CD4-positive, alpha-beta T cell (primary cell): ENCODE measurements at regions of chr1 and their contacts with region 1.

Region 1: DNA sequence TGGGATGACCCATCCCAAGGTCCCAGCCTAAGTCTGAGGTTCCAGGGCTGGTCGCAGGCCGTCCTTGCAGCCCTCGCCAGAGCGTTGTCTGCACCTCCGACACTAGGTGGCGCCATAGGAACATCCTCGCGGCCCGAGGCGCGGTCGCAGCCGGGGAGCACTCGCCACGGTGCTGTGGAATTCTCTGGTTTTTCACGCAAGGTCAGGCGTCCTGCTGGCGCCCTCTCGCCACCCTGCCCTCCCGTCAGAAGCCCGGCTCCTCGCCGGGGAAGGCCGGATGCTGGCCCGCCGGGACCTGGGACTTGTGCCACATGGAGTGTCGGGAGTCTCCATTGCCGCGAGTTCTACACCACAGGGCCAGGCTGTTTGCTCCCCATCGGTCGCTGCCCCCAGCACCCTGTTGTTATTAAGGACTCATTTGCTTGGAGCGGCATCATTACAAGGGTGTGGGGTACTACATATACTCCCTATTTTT is 196.8 kb upstream of the LMO4 start:
- DNase-seq: peak; percentile 56 to 85 (median 66)
- ATAC-seq: peak; percentile 89
- H3K4me3 ChIP-seq: peak overlapping the region; percentile 56
- H3K4me3 Mint-ChIP-seq: peak overlapping the region; percentile 89
- H3K27ac ChIP-seq: no peak overlapping the region
- H3K27ac Mint-ChIP-seq: no peak overlapping the region
- H3K4me1 ChIP-seq: peaks cover 9% of the 10 kb centered on the region
- H3K4me1 Mint-ChIP-seq: peaks cover 10% of the 10 kb centered on the region
- H3K27me3 ChIP-seq: peaks cover 9 to 15% of the 10 kb centered on the region in 2 experiments
- H3K27me3 Mint-ChIP-seq: peaks cover 44% of the 10 kb centered on the region
- CTCF ChIP-seq: peak; percentile 91

Region 2: GRCh38 chr1:87953732-87954344 is 822.0 kb after region 1 on chr1:
- CTCF ChIA-PET with region 1: no interaction called
- POLR2A ChIA-PET with region 1: no interaction called
- intact Hi-C with region 1: loop called (anchors 5 kb)
- DNase-seq: peak; percentile 7 to 69 (median 32)
- ATAC-seq: no peak
- H3K4me3 ChIP-seq: no peak overlapping the region
- H3K4me3 Mint-ChIP-seq: no peak overlapping the region
- H3K27ac ChIP-seq: no peak overlapping the region
- H3K27ac Mint-ChIP-seq: no peak overlapping the region
- H3K4me1 ChIP-seq: no peaks in the 10 kb centered on the region
- H3K4me1 Mint-ChIP-seq: no peaks in the 10 kb centered on the region
- H3K27me3 ChIP-seq: no peaks in the 10 kb centered on the region
- H3K27me3 Mint-ChIP-seq: peaks cover 28% of the 10 kb centered on the region
- CTCF ChIP-seq: peak; percentile 70

Region 3: DNA sequence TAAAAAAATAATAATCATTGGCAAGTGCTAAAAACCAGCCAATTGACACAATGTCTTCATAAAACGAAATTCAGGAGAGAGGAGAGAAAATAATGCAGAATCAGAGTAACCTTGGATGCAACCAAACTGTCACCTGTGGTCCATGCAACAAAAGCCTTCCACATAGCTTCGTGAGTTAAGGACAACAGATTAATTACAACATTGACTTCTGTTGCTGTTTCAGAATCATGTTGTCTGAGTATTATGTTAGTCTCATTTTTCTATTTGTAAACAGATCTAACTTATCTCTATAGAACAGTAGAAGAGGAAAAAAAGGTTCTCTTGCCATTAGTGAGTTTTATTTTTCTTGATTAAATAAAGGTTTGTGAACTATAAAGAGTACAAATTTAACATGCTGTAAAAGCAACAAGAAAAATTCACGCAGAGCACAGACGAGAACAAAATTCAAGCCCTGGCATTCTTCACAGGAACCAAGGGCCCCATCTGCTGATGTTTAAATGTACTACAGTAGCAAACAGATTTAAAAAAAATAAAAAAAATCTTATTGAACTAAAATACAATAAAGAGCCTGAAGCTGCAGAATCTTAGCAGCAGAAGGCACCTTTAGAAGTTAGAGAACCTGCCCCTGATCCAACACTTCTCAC is 1171.1 kb after region 1 on chr1:
- CTCF ChIA-PET with region 1: no interaction called
- POLR2A ChIA-PET with region 1: no interaction called
- intact Hi-C with region 1: loop called in 1 of 2 experiments (anchors 5 kb)
- DNase-seq: no peak
- ATAC-seq: no peak
- H3K4me3 ChIP-seq: no peak overlapping the region
- H3K4me3 Mint-ChIP-seq: no peak overlapping the region
- H3K27ac ChIP-seq: no peak overlapping the region
- H3K27ac Mint-ChIP-seq: no peak overlapping the region
- H3K4me1 ChIP-seq: no peaks in the 10 kb centered on the region
- H3K4me1 Mint-ChIP-seq: no peaks in the 10 kb centered on the region
- H3K27me3 ChIP-seq: no peaks in the 10 kb centered on the region
- H3K27me3 Mint-ChIP-seq: no peaks in the 10 kb centered on the region
- CTCF ChIP-seq: no peak

Region 4: DNA sequence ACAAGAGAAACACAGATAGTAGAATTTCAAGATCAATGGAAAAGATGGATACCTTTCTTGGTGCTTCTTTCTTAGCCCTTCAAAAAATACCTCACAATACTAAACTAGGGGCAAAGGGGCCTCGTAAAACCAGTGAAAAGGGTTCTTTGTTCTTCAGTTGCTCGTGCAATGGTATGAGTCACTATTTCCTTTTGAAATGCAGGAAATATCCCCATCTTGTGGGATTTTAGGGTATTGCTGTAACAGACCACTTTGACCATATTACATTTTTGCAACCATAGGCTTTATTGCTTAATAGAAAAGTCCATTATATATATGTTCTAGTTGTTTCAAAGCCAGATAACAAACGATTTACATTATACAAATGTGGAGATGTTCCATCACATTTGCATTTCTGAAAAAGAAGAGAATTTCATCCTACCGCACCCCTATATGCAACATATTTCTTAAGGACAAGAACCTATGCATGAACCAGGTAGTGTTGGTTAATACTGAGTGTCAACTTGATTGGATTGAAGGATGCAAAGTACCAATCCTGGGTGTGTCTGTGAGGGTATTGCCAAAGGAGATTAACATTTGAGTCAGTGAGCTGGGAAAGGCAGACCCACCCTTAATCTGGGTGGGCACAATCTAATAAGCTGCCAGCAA is 1463.6 kb after region 1 on chr1:
- CTCF ChIA-PET with region 1: no interaction called
- POLR2A ChIA-PET with region 1: no interaction called
- intact Hi-C with region 1: loop called (anchors 5 kb)
- DNase-seq: peak in 3 of 14 experiments; percentile 41 to 51 (median 46)
- ATAC-seq: peak; percentile 49
- H3K4me3 ChIP-seq: no peak overlapping the region
- H3K4me3 Mint-ChIP-seq: no peak overlapping the region
- H3K27ac ChIP-seq: no peak overlapping the region
- H3K27ac Mint-ChIP-seq: no peak overlapping the region
- H3K4me1 ChIP-seq: no peaks in the 10 kb centered on the region
- H3K4me1 Mint-ChIP-seq: no peaks in the 10 kb centered on the region
- H3K27me3 ChIP-seq: no peaks in the 10 kb centered on the region
- H3K27me3 Mint-ChIP-seq: peaks cover 11% of the 10 kb centered on the region
- CTCF ChIP-seq: peak; percentile 52

Region 5: DNA sequence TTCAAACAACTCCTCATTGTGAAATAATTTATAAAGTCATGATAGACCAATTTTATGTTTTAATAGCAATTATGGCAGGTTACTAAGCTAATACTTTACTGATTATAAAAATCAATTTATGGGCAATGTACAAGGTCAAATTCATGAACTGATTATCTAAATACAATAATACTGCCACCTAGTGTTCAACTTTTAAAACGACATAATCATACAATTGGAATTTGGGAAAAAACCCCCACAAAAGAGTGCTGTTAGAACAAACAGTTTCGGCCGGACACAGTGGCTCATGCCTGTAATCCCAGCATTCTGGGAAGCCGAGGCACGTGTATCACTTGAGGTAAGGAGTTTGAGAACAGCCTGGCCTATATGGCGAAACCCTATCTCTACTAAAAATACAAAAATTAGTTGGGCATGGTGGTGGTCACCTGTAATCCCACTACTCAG is 1745.6 kb after region 1 on chr1:
- CTCF ChIA-PET with region 1: no interaction called
- POLR2A ChIA-PET with region 1: no interaction called
- intact Hi-C with region 1: loop called in 1 of 2 experiments (anchors 10 kb)
- DNase-seq: peak in 3 of 14 experiments; percentile 32 to 38 (median 35)
- ATAC-seq: no peak
- H3K4me3 ChIP-seq: no peak overlapping the region
- H3K4me3 Mint-ChIP-seq: peak overlapping the region; percentile 34
- H3K27ac ChIP-seq: no peak overlapping the region
- H3K27ac Mint-ChIP-seq: peak overlapping the region; percentile 44
- H3K4me1 ChIP-seq: peaks cover 16% of the 10 kb centered on the region
- H3K4me1 Mint-ChIP-seq: peaks cover 69% of the 10 kb centered on the region
- H3K27me3 ChIP-seq: no peaks in the 10 kb centered on the region
- H3K27me3 Mint-ChIP-seq: no peaks in the 10 kb centered on the region
- CTCF ChIP-seq: peak; percentile 90